ENCODE measurements at regions of chr15 and their contacts with region 1.

Region 1: DNA sequence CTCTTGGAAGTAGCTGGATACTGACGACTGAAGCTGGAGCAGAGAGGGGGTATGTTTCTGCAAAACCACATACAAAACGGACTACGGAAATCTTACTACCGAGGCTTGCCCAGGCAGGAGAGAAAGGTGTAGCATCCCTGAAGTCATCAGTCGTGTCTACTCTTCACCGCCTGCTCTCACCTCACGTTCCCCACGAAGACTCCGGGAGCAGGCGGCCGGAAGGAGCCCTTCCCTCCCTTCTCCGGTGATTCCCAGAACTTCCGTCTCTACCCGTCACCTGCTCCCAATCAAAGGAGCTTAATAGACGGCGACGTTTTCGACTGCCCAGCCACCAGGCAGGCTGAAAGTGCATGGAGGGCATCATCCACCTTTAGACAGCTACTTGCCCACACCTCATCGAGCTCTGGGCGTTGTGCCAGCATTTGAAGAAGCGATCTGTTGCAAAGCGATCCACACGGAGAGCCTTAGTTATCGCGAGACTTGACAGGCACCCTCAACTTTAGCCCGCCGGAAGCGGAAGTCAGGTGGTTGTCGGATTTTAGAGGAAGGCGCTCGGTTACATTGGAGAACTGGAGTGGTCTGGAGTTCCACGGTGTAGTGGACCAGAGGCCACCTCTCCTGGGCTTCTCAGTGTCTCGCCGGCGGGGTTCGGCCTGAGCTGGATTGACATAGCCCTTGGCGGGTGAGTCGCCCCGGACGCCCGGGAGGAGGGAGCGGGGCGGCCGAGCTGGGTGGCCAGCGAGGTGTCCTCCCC is at the start of gene RAMAC:
- DNase-seq: peak; percentile 86
- H3K4me3 Mint-ChIP-seq: peak within 1 kb of the TSS; percentile 98
- H3K27ac Mint-ChIP-seq: peak within 1 kb of the TSS; percentile 73
- H3K4me1 Mint-ChIP-seq: peaks cover 25% of the 10 kb centered on the region
- H3K27me3 Mint-ChIP-seq: no peaks in the 10 kb centered on the region
- total RNA-seq, gene RAMAC: 26.1 and 27.3 TPM in 2 replicates

Region 2: DNA sequence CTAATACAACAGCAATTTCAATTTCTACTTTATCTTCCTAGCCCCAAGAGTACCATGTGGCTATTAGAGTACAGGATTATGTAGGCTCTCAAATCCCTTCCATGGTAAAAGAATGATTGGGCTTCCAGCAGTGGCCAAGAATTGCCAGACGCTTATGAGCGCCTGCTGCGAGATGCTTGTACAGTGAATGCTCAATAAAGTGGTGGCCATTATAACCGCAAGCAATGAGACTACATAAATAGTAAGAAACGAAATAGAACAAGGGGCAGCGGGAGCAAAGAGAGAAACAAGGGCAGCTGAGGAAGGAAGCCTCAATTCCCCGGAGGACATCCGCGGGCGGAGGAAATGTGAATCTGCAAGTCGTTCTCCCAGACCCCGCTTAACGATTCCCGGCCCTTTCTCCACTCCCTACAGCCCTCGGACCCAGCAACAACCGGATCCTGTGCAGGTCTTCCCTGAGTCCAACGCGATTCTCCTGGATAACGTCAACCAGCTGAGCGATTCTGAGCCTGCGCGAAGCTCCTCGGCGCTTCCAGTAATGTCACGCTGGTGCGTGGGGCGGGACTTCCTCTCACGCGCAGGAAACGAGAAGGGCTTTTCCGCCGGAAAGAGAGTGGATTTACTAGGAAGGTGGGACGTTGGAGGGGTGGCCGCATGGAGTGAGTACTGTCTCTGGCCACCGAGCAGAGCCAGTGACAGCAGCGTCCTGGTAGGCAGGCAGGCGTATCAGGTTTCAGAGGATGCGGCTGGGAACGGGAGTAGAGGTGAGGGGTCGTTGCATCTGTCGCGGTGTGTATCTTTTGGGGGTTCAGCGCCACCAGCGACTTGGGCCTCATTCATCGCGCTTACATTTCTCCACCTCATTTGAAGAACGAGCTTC is 235.7 kb before region 1 on chr15:
- intact Hi-C with region 1: loop called (anchors 1 kb)
- DNase-seq: peak; percentile 82
- H3K4me3 Mint-ChIP-seq: peak overlapping the region; percentile 100
- H3K27ac Mint-ChIP-seq: peak overlapping the region; percentile 97
- H3K4me1 Mint-ChIP-seq: peaks cover 39% of the 10 kb centered on the region
- H3K27me3 Mint-ChIP-seq: no peaks in the 10 kb centered on the region

Region 3: DNA sequence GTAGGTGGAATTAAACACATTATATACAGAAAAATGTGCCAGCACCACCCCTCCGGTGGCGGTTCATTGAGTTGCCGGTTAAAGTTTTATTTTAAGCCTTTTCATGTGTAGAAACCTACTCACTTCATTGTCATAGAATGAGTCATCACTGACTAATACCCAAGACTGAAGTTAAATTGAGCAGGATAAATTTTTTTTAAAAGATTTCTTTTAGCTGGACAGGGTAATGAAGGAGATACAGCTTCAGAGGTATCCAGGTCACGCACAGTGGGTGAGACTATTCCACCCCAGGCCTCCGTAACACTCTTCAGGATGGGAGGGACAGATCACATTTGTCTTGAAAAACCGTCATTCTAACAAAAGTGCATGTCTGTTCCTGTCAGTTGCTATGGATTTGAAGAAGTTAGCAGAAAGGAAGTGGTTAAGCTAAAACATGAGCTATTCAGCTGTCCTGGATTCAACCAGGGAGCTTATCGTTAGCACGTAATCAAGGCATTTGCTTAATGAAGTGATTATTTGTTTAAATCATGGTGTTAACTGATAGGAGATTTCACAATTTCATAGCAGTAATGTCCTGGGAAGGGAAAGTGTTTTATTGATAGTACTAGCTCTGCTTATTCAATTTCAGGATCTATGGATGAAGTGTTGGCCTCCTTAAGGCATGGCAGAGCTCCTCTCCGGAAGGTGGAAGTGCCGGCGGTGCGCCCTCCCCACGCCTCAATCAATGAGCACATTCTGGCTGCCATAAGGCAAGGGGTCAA is 153.1 kb before region 1 on chr15:
- intact Hi-C with region 1: loop called (anchors 1 kb)
- DNase-seq: peak; percentile 17
- H3K4me3 Mint-ChIP-seq: peak overlapping the region; percentile 57
- H3K27ac Mint-ChIP-seq: peak overlapping the region; percentile 87
- H3K4me1 Mint-ChIP-seq: peaks cover 54% of the 10 kb centered on the region
- H3K27me3 Mint-ChIP-seq: peaks cover 2% of the 10 kb centered on the region

Region 4: DNA sequence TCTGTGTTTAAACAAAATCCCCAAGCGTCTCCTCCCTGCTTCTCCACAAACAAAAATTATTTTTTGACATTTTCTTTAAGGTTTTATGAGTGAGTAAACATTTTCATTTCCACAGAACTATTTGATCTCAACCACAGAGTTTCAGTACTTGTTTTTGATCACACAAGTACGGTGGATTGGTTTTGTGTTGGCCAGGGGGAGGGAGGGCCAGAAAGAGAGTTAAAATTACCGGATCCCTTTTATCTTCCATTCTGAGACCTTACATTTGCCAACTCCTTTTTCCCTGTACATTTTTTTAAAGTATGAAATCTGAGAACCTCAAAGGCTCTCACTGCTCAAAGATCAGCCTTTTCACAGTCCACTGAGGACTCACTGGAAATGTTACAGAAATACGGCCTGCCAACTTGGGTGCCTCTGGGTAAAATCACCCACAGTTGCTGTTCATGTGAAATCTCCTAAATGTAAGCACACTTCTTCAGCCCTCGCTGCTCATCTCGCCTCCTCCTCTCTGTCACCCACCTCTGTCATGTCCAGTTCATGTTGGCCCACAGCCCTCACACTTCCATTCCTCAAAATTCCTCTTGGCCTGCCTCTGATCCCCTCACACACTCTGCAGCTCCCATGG is 35.0 kb before region 1 on chr15:
- intact Hi-C with region 1: loop called (anchors 1 kb)
- DNase-seq: no peak
- H3K4me3 Mint-ChIP-seq: no peak overlapping the region
- H3K27ac Mint-ChIP-seq: no peak overlapping the region
- H3K4me1 Mint-ChIP-seq: no peaks in the 10 kb centered on the region
- H3K27me3 Mint-ChIP-seq: peaks cover 22% of the 10 kb centered on the region

Region 5: DNA sequence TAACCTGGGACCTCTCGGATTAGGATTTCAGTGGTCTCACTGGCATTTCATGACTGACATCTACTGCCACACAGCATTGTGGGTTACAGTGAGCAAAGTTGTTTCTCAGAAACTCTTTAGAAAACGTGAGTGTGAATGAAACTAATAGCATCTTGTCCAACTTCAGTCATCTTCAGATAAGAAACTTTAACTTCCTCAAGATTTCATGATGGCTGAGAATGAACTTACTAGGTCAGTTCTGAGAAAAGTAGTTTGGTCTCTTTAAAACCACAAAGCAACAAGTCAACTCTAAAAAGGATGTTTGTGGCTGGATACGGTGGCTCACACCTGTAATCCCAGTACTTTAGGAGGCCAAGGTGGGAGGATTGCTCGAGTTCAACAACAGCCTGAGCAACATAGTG is 19.2 kb before region 1 on chr15:
- intact Hi-C with region 1: loop called (anchors 1 kb)
- DNase-seq: peak; percentile 19
- H3K4me3 Mint-ChIP-seq: peak overlapping the region; percentile 13
- H3K27ac Mint-ChIP-seq: no peak overlapping the region
- H3K4me1 Mint-ChIP-seq: peaks cover 12% of the 10 kb centered on the region
- H3K27me3 Mint-ChIP-seq: peaks cover 37% of the 10 kb centered on the region

Region 6: GRCh38 chr15:82999905-83000671 is 14.2 kb after region 1 on chr15:
- intact Hi-C with region 1: loop called (anchors 2 kb)
- DNase-seq: peak; percentile 28
- H3K4me3 Mint-ChIP-seq: peak overlapping the region; percentile 60
- H3K27ac Mint-ChIP-seq: peak overlapping the region; percentile 9
- H3K4me1 Mint-ChIP-seq: peaks cover 9% of the 10 kb centered on the region
- H3K27me3 Mint-ChIP-seq: no peaks in the 10 kb centered on the region

Region 7: GRCh38 chr15:83011271-83012075 is 25.6 kb after region 1 on chr15 and contains the start of gene C15orf40:
- intact Hi-C with region 1: loop called (anchors 1 kb)
- DNase-seq: peak; percentile 84
- H3K4me3 Mint-ChIP-seq: peak within 1 kb of the TSS; percentile 99
- H3K27ac Mint-ChIP-seq: peak within 1 kb of the TSS; percentile 98
- H3K4me1 Mint-ChIP-seq: peaks cover 50% of the 10 kb centered on the region
- H3K27me3 Mint-ChIP-seq: no peaks in the 10 kb centered on the region
- total RNA-seq, gene C15orf40: 24.2 and 29.0 TPM in 2 replicates

Measured in activated T-helper 1 cell treated with anti-CD3 and anti-CD28 coated beads, Interleukin-12 subunit alpha, Interleukin-12 subunit beta, Interleukin-2, Interleukin-4 antibody, amounts not matched to agents 30 ng/mL and 10 ng/mL and 1 ng/mL, durations not matched to agents 14 hours and 24 hours and 36 hours (primary cell).